Activated B cell treated with CpG ODN at 0.5 μM for 24 hours (primary cell): ENCODE measurements at regions of chr5 and their contacts with region 1.

Region 1: DNA sequence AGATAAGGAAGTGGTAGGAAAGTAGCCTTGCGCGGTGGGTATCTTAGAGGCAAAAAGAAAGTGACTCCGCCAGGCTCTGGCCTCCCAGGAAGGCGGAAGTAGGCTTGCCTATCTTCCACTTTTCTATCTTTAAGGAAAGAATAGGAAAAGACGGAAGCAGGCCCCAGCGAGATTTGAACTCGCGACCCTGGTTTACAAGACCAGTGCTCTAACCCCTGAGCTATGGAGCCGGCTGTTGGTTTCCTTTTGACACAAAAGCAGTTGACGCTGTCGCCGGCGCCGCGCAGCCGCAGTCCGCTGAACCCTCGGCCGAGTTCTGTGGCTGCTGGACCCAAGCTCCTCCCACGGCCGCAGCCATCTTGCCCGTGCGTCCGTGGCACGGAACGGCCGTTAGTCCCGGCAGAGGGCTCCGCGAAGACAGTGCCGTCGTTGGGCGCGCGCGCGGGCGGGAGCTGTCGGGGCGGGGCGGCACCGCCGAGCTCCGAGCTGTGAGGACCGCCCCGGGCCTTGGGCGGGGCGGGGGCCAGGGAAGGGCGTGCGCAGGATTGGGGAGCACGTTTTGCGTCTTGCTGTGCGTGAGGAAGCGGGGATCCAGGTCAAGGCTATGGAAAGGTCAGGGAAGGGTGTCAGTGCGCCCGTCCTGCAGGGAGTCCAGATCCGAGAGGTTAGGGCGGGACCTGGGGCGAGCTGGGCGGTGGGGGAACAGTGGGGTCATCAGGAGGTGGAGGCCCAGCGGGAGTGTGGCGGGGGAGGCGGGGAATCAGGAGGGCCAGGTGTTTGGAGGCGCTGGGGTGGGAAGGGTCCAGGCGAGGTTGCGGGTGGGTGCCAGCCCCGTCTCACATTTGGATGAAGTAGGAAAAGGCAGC is 13.2 kb downstream of the TRIM7 start:
- DNase-seq: peak; percentile 99
- ATAC-seq: peak; percentile 63
- H3K4me3 Mint-ChIP-seq: peak overlapping the region; percentile 88
- H3K27ac Mint-ChIP-seq: peak overlapping the region; percentile 96
- H3K4me1 Mint-ChIP-seq: peaks cover 34% of the 10 kb centered on the region
- H3K27me3 Mint-ChIP-seq: peaks cover 11% of the 10 kb centered on the region
- CTCF ChIP-seq: no peak

Region 2: DNA sequence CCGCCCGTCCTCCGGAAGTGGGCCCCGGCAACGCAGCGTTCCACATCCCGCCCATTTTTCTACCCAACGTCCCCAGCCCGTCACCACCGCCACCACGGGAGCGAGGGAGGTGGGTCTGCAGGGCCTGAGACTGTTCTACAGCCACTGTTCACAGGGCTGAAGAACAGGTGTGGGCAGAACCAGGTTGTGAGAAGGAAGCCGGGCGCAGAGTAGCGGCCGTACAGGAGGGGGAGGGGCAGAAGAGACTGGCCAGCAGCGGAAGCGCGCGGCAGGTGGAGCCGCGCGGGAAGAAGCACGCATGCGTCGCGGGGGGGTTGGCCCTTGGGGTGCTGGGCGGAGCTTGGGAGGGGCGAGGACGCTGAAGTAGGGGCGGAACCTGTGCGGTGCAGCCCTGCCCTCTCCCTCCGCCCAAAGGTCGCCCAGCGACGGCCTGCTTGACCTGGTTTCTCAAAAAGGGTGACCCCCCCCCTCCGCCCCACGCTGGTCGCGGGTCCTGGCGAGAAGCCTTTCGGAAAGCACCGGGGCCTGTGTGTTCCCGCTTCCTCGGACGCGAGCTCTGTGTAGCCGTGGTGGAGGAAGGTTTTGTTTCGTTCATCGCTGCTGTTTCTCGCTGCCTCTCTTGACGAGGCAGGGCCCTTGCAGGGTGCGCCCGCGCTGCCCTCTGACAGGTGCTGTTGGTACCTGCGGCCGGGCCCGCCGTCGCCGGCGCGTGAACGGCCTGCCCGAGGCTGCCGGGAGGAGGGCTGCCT is 381.4 kb before region 1 on chr5:
- CTCF ChIA-PET with region 1: no interaction called
- POLR2A ChIA-PET with region 1: interaction called, 14 read pairs
- intact Hi-C with region 1: no loop called
- DNase-seq: peak; percentile 98
- ATAC-seq: peak; percentile 84
- H3K4me3 Mint-ChIP-seq: peak overlapping the region; percentile 98
- H3K27ac Mint-ChIP-seq: peak overlapping the region; percentile 100
- H3K4me1 Mint-ChIP-seq: peaks cover 76% of the 10 kb centered on the region
- H3K27me3 Mint-ChIP-seq: no peaks in the 10 kb centered on the region
- CTCF ChIP-seq: no peak

Region 3: DNA sequence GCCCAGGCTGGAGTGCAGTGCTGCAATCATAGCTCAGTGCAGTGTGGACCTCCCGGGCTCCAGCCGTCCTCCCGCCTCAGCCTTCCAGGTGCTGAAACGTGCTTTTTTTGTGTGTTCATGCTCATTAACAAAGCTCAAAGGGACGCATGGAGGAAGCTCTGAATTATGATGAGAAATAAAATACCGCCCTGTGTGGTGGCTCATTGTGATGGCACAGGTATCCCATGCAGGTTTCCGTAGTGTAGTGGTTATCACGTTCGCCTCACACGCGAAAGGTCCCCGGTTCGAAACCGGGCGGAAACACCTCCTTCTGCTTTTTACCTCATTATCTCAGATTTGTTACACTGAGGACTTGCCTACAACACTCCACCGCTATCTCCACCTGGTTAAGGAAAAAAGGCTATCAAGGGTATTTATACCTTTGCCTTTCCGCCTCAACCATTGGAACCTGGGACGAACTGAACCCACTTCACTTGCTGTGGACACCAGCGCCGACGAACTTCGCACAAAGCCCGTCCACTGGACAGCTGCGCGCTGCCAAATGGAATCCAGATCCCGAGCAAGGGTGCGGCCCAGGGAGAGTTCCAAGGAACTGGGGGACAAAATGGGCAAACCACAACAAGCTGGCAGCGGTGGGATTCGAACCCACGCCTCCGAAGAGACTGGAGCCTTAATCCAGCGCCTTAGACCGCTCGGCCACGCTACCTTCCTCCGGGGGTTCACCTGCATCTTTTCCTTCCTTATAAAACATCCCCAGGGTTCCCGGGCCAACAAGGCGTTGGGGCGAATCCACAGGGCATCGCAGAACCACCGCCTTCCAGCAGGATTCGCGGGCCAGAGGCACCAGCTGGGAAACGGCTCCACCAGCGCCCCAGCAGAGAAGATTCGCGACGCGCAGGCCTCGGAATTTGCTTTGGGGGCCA is 18.1 kb before region 1 on chr5:
- CTCF ChIA-PET with region 1: interaction called, 6 read pairs
- POLR2A ChIA-PET with region 1: interaction called, 14 read pairs
- intact Hi-C with region 1: loop called (anchors 1 kb)
- DNase-seq: peak; percentile 40
- ATAC-seq: peak; percentile 76
- H3K4me3 Mint-ChIP-seq: peak overlapping the region; percentile 83
- H3K27ac Mint-ChIP-seq: peak overlapping the region; percentile 78
- H3K4me1 Mint-ChIP-seq: peaks cover 33% of the 10 kb centered on the region
- H3K27me3 Mint-ChIP-seq: peaks cover 16% of the 10 kb centered on the region
- CTCF ChIP-seq: no peak

Region 4: DNA sequence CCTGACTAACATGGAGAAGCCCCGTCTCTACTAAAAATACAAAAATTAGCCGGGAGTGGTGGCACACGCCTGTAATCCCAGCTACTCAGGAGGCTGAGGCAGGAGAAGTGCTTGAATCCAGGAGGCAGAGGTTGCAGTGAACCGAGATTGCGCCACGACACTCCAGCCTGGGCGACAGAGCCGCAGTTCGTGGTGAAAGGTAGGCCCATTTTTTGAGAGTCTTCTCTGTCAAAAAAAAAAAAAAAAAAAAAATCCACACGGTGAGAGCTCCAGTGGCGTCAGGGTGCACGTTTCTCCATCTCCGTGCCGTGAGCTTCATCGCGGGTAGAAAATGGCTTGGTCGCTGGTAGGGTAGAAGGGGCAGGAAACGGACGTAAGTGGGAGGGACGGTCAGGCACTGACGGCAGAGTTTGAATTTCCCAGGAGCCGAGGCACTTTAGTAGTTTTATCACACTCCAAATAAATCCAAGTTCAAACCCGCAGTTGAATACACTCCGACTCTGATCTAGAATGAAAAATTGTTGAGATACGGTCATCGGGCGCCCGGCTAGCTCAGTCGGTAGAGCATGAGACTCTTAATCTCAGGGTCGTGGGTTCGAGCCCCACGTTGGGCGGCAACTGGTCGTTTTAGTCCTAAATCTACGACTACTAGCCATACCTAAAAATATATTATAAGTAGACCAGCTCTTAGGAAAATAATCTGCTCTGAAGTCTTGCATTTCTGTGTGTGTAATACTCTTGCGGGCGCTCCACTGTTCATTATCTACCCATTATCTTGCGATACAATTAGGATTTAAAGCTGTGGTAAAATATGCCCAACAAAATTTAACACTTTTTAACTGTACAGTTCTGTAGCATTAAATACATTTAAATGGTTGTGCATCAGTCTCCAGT is 15.7 kb after region 1 on chr5:
- CTCF ChIA-PET with region 1: interaction called, 17 read pairs
- POLR2A ChIA-PET with region 1: interaction called, 317 read pairs
- intact Hi-C with region 1: loop called (anchors 1 kb)
- DNase-seq: peak; percentile 56
- ATAC-seq: peak; percentile 62
- H3K4me3 Mint-ChIP-seq: peak overlapping the region; percentile 92
- H3K27ac Mint-ChIP-seq: peak overlapping the region; percentile 97
- H3K4me1 Mint-ChIP-seq: peaks cover 34% of the 10 kb centered on the region
- H3K27me3 Mint-ChIP-seq: peaks cover 15% of the 10 kb centered on the region
- CTCF ChIP-seq: no peak

Region 5: DNA sequence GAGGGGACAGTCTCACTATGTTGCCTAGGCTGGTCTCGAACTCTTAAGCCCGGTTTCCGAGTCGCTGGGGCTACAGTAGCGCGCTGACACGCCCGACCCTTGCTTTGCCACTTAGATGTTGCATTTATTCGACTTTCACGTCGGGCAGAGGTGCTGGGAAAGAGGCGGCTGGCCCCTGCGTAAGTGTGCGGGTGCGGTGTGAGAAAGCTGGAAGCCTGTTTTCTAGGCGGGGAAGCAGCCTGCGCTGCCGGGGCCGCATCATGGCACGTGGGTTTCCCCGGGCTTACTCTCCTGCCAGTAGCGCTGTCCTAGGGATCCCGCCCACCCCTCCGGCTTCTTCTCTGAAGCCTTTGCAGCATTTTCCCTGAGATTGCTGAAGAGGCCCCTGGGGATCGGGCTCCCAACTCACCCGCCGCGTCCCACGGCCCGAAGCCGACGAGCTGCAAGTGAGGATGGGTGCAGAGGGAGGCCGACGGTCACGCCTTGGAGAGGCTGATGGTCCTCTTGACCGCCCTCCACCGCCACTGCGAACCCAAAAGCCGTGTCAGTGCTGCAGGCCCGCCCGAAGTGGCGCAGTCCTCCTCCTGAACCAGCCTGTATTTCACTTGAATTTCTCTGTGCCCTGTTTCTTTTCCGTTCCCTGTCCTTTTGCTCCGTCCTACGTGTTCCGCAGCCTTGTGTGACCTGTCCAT is 25.5 kb after region 1 on chr5:
- CTCF ChIA-PET with region 1: interaction called, 5 read pairs
- POLR2A ChIA-PET with region 1: interaction called, 137 read pairs
- intact Hi-C with region 1: loop called (anchors 1 kb)
- DNase-seq: peak; percentile 61
- ATAC-seq: peak; percentile 23
- H3K4me3 Mint-ChIP-seq: peak overlapping the region; percentile 93
- H3K27ac Mint-ChIP-seq: peak overlapping the region; percentile 96
- H3K4me1 Mint-ChIP-seq: peaks cover 40% of the 10 kb centered on the region
- H3K27me3 Mint-ChIP-seq: peaks cover 7% of the 10 kb centered on the region
- CTCF ChIP-seq: no peak

Region 6: GRCh38 chr5:181243512-181244343 is 52.0 kb after region 1 on chr5 and contains the start of gene RACK1:
- CTCF ChIA-PET with region 1: interaction called, 4 read pairs
- POLR2A ChIA-PET with region 1: interaction called, 87 read pairs
- intact Hi-C with region 1: loop called (anchors 1 kb)
- DNase-seq: peak; percentile 79
- ATAC-seq: peak; percentile 79
- H3K4me3 Mint-ChIP-seq: peak within 1 kb of the TSS; percentile 96
- H3K27ac Mint-ChIP-seq: peak within 1 kb of the TSS; percentile 98
- H3K4me1 Mint-ChIP-seq: peaks cover 73% of the 10 kb centered on the region
- H3K27me3 Mint-ChIP-seq: no peaks in the 10 kb centered on the region
- CTCF ChIP-seq: no peak
- total RNA-seq, gene RACK1: 2,528 and 2,812 TPM in 2 replicates